Activated B cell treated with CpG ODN at 0.5 μM for 24 hours (primary cell): ENCODE measurements at regions of chr1 and their contacts with region 1.

Region 1: GRCh38 chr1:90989990-90990389 is 31.8 kb downstream of the ZNF644 start:
- DNase-seq: no peak
- ATAC-seq: peak; percentile 34
- H3K4me3 Mint-ChIP-seq: no peak overlapping the region
- H3K27ac Mint-ChIP-seq: peak overlapping the region; percentile 73
- H3K4me1 Mint-ChIP-seq: peaks cover 92% of the 10 kb centered on the region
- H3K27me3 Mint-ChIP-seq: no peaks in the 10 kb centered on the region
- CTCF ChIP-seq: no peak

Region 2: GRCh38 chr1:91011726-91012125 is 21.7 kb after region 1 on chr1:
- CTCF ChIA-PET with region 1: no interaction called
- POLR2A ChIA-PET with region 1: no interaction called
- intact Hi-C with region 1: loop called (anchors 2 kb)
- DNase-seq: no peak
- ATAC-seq: no peak
- H3K4me3 Mint-ChIP-seq: no peak overlapping the region
- H3K27ac Mint-ChIP-seq: no peak overlapping the region
- H3K4me1 Mint-ChIP-seq: peaks cover 76% of the 10 kb centered on the region
- H3K27me3 Mint-ChIP-seq: no peaks in the 10 kb centered on the region
- CTCF ChIP-seq: no peak